Dendritic cell treated with granulocyte-macrophage colony-stimulating factor and Interleukin-4, amounts not matched to agents 40 ng/mL and 50 ng/mL, for 4 days (primary cell): ENCODE measurements at regions of chr14 and their contacts with region 1.

Region 1: DNA sequence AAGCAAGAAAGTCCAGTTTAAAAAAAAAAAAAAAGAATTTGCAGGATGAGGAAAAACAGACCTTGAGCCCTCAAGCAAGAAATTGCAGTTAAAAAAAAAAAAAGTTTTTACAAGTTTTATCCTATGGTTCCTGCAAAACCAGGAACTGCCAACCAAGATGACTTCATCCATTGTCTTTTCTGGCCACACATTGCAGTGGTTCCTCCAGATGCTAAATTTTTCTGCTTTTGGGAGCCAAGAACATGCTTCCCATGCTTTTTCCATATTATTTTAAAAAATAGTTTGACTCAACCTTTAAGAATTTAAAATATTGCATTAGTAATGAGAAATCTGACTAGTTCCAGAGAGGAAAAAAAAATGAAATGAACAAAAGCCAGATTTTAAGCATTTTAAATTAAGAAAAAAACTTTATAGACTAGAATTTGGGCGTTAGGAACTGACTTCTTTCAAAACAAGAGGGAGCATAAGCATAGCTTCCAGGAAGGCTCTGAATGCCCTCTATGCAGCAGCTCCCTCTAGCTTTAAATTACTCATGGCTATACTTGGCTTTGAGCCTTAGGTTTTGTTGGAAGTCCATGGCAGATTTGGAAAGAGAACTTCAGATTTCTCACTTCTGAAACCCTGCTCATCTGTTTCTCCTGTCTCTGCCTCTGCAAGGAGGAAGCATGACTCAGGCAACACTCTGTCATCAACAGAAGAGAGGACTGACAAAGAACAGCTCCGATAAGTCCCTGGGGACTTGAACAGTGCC is 124.5 kb downstream of the GPR65 start:
- H3K4me3 Mint-ChIP-seq: peak overlapping the region; percentile 51
- H3K27ac Mint-ChIP-seq: peak overlapping the region; percentile 78
- H3K4me1 Mint-ChIP-seq: peaks cover 19% of the 10 kb centered on the region
- H3K27me3 Mint-ChIP-seq: peaks cover 22% of the 10 kb centered on the region

Region 2: DNA sequence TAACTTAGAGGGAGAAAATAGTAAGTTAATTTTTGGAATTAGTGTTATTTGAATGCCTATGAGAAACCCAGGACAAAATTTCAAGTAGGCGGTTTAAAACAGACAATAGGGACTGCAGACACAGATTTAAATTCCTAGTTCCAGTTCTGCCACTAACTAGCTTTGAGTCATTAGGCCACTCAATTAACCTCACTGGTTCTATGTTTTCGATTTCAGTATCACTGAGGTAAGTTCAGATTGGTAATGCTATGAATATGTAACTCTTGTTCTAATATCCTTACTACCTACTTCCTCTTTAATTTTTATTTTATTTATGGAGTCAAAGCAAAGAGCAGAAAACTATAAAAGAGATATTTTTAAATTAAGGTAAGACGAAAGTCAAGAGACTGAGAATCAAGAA is 189.1 kb before region 1 on chr14:
- intact Hi-C with region 1: no loop called
- H3K4me3 Mint-ChIP-seq: no peak overlapping the region
- H3K27ac Mint-ChIP-seq: no peak overlapping the region
- H3K4me1 Mint-ChIP-seq: no peaks in the 10 kb centered on the region
- H3K27me3 Mint-ChIP-seq: no peaks in the 10 kb centered on the region

Region 3: GRCh38 chr14:88146881-88147649 is 17.6 kb after region 1 on chr14:
- intact Hi-C with region 1: loop called (anchors 2 kb)
- H3K4me3 Mint-ChIP-seq: no peak overlapping the region
- H3K27ac Mint-ChIP-seq: no peak overlapping the region
- H3K4me1 Mint-ChIP-seq: peaks cover 27% of the 10 kb centered on the region
- H3K27me3 Mint-ChIP-seq: peaks cover 51% of the 10 kb centered on the region